CD4-positive, alpha-beta T cell (primary cell): ENCODE measurements at regions of chr1 and their contacts with region 1.

Region 1: DNA sequence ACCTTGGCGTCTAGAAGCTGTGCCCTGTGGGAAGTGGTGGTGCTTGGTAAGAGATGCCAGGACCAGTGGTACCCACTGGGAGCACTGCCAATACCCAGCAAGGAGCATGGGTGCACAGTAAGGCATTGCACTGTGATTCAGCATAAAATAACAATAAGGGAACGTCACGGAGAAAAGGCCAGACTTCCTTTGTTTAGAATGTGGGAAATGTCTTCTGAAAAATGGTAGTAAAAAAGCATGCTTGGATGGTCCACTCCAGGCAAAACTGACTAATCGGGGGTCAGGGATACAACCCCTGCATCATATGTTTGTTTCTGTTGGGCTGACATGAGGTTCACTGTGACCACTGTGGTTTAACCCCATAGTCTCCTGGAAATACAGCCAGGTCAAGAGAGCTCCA is 14.7 kb downstream of the METTL18 start:
- DNase-seq: no peak
- ATAC-seq: no peak
- H3K4me3 ChIP-seq: no peak overlapping the region
- H3K4me3 Mint-ChIP-seq: no peak overlapping the region
- H3K27ac ChIP-seq: no peak overlapping the region
- H3K27ac Mint-ChIP-seq: no peak overlapping the region
- H3K4me1 ChIP-seq: no peaks in the 10 kb centered on the region
- H3K4me1 Mint-ChIP-seq: no peaks in the 10 kb centered on the region
- H3K27me3 ChIP-seq: peaks cover 2 to 23% of the 10 kb centered on the region in 2 experiments
- H3K27me3 Mint-ChIP-seq: peaks cover 22% of the 10 kb centered on the region
- CTCF ChIP-seq: no peak

Region 2: GRCh38 chr1:169722776-169723175 is 57.2 kb before region 1 on chr1:
- CTCF ChIA-PET with region 1: no interaction called
- POLR2A ChIA-PET with region 1: no interaction called
- intact Hi-C with region 1: loop called in 1 of 2 experiments (anchors 5 kb)
- DNase-seq: no peak
- ATAC-seq: no peak
- H3K4me3 ChIP-seq: no peak overlapping the region
- H3K4me3 Mint-ChIP-seq: no peak overlapping the region
- H3K27ac ChIP-seq: no peak overlapping the region
- H3K27ac Mint-ChIP-seq: no peak overlapping the region
- H3K4me1 ChIP-seq: no peaks in the 10 kb centered on the region
- H3K4me1 Mint-ChIP-seq: no peaks in the 10 kb centered on the region
- H3K27me3 ChIP-seq: peaks cover 0 to under 1% of the 10 kb centered on the region in 2 experiments
- H3K27me3 Mint-ChIP-seq: no peaks in the 10 kb centered on the region
- CTCF ChIP-seq: no peak

Region 3: GRCh38 chr1:169741666-169742394 is 38.1 kb before region 1 on chr1:
- CTCF ChIA-PET with region 1: no interaction called
- POLR2A ChIA-PET with region 1: no interaction called
- intact Hi-C with region 1: no loop called
- DNase-seq: no peak
- ATAC-seq: no peak
- H3K4me3 ChIP-seq: no peak overlapping the region
- H3K4me3 Mint-ChIP-seq: no peak overlapping the region
- H3K27ac ChIP-seq: no peak overlapping the region
- H3K27ac Mint-ChIP-seq: no peak overlapping the region
- H3K4me1 ChIP-seq: no peaks in the 10 kb centered on the region
- H3K4me1 Mint-ChIP-seq: no peaks in the 10 kb centered on the region
- H3K27me3 ChIP-seq: peaks cover 0 to 11% of the 10 kb centered on the region in 2 experiments
- H3K27me3 Mint-ChIP-seq: peaks cover 6% of the 10 kb centered on the region
- CTCF ChIP-seq: no peak